Mammary epithelial cell (primary cell): ENCODE measurements at regions of chr1 and their contacts with region 1.

Region 1: DNA sequence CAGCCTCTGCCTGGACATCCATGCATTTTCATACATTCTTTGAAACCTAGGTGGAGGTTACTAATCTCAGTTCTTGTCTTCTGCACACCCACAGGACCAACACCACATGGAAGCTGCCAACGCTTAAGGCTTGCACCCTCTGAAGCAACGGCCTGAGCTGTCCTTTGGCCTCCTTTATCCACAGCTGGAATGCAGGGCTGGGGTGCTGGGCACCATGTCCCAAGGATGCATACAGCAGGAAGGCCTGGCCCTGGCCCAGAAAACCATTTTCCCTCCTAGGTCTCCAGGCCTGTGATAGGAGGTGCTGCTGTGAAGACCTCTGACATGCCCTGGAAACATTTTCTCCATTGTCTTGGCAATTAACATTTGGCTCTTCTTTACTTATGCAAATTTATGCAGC is 1168.6 kb downstream of the KCNT2 start:
- DNase-seq: no peak
- H3K4me3 ChIP-seq: no peak overlapping the region
- H3K27ac ChIP-seq: no peak overlapping the region
- H3K4me1 ChIP-seq: no peaks in the 10 kb centered on the region
- H3K27me3 ChIP-seq: no peaks in the 10 kb centered on the region
- CTCF ChIP-seq: no peak

Region 2: DNA sequence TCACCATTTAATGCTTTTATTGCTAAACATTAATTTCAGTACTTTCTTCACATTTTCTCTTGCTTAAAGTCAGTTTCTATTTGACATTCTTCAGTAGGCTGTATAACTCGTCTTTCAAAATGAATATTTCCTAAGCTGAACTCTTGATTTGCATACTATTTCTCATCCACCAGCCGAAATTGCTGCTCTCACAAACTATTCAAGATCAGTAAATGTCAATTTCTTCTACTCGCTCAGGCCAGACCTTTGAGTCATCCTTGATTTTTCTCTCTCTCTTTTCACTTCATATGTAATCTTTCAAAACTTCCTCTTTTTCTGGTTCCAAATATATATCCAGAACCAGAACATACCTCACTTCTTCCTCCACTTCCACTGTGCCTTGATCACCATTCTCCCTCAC is 178.6 kb after region 1 on chr1:
- CTCF ChIA-PET with region 1: no interaction called
- dilution Hi-C with region 1: no loop called
- in situ Hi-C with region 1: no loop called
- intact Hi-C with region 1: loop called (anchors 10 kb)
- DNase-seq: no peak
- H3K4me3 ChIP-seq: no peak overlapping the region
- H3K27ac ChIP-seq: no peak overlapping the region
- H3K4me1 ChIP-seq: no peaks in the 10 kb centered on the region
- H3K27me3 ChIP-seq: peaks cover 2% of the 10 kb centered on the region
- CTCF ChIP-seq: no peak